Activated naive CD8-positive, alpha-beta T cell treated with anti-CD3 and anti-CD28 coated beads, Interleukin-2, amount 10 ng/mL, durations not matched to agents 7 days and 5 days (primary cell): ENCODE measurements at regions of chr11 and their contacts with region 1.

Region 1: GRCh38 chr11:87037450-87038234 is at the start of gene TMEM135:
- DNase-seq: peak; percentile 99
- ATAC-seq: peak; percentile 97
- H3K4me3 Mint-ChIP-seq: peak within 1 kb of the TSS; percentile 98
- H3K27ac Mint-ChIP-seq: peak within 1 kb of the TSS; percentile 94
- H3K4me1 Mint-ChIP-seq: peaks cover 33% of the 10 kb centered on the region
- H3K27me3 Mint-ChIP-seq: peaks cover 8% of the 10 kb centered on the region
- total RNA-seq, gene TMEM135: 29.2 to 34.5 TPM

Region 2: GRCh38 chr11:87081358-87081757 is 43.7 kb after region 1 on chr11:
- POLR2A ChIA-PET with region 1: interaction called, 27 read pairs
- DNase-seq: no peak
- ATAC-seq: peak; percentile 65
- H3K4me3 Mint-ChIP-seq: peak overlapping the region; percentile 77
- H3K27ac Mint-ChIP-seq: peak overlapping the region; percentile 90
- H3K4me1 Mint-ChIP-seq: peaks cover 20% of the 10 kb centered on the region
- H3K27me3 Mint-ChIP-seq: no peaks in the 10 kb centered on the region